ENCODE measurements at regions of chr7 and their contacts with region 1.

Region 1: DNA sequence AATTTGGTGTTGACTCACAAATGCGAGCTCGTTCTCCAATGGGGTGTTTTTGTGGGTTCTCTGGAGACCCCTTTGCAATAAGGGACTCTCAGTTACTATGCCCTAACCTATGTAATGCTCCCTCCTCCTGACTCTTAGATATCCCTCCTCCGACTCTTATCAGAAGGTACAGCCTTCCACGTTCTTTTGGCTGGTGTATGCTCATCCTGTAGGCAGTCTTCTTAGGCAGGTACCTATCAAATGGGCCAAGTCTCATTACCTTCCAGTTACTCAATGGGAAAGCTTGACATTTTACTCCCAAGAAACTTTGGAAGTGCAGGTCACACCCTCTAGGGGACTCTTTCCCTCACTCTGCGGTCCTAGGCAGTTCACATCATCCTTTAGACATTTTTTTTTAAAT is 32.6 kb downstream of the SLC26A5 start:
- DNase-seq: no peak
- ATAC-seq: no peak
- H3K4me3 ChIP-seq: no peak overlapping the region
- H3K27ac ChIP-seq: no peak overlapping the region
- H3K4me1 ChIP-seq: no peaks in the 10 kb centered on the region
- H3K27me3 ChIP-seq: no peaks in the 10 kb centered on the region
- CTCF ChIP-seq: no peak

Region 2: GRCh38 chr7:103317016-103317415 is 96.4 kb before region 1 on chr7:
- CTCF ChIA-PET with region 1: no interaction called
- POLR2A ChIA-PET with region 1: no interaction called
- intact Hi-C with region 1: loop called (anchors 5 kb)
- DNase-seq: no peak
- ATAC-seq: no peak
- H3K4me3 ChIP-seq: no peak overlapping the region
- H3K27ac ChIP-seq: no peak overlapping the region
- H3K4me1 ChIP-seq: no peaks in the 10 kb centered on the region
- H3K27me3 ChIP-seq: no peaks in the 10 kb centered on the region
- CTCF ChIP-seq: no peak

Region 3: DNA sequence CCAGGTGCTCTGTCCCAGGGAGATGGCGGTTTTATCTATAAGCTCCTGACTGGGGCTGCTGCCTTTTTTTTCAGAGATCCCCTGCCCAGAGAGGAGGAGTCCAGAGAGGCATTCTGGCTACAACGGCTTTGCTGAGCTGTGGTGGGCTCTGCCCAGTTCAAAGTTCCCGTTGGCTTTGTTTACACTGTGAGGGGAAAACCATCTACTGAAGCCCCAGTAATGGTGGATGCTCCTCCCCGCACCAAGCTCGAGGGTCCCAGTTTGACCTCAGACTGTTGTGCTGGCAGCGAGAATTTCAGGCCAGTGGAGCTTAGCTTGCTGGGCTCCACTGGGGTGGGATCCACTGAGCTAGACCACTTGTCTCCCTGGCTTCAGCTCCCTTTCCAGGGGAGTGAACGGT is 49.0 kb after region 1 on chr7:
- CTCF ChIA-PET with region 1: no interaction called
- POLR2A ChIA-PET with region 1: no interaction called
- intact Hi-C with region 1: no loop called
- DNase-seq: no peak
- ATAC-seq: no peak
- H3K4me3 ChIP-seq: no peak overlapping the region
- H3K27ac ChIP-seq: no peak overlapping the region
- H3K4me1 ChIP-seq: no peaks in the 10 kb centered on the region
- H3K27me3 ChIP-seq: no peaks in the 10 kb centered on the region
- CTCF ChIP-seq: no peak

Region 4: GRCh38 chr7:103547451-103548284 is 134.3 kb after region 1 on chr7:
- CTCF ChIA-PET with region 1: no interaction called
- POLR2A ChIA-PET with region 1: interaction called, 18 read pairs
- intact Hi-C with region 1: no loop called
- DNase-seq: no peak
- ATAC-seq: no peak
- H3K4me3 ChIP-seq: no peak overlapping the region
- H3K27ac ChIP-seq: no peak overlapping the region
- H3K4me1 ChIP-seq: peaks cover 5% of the 10 kb centered on the region; the same call in 1 of the 2 replicates
- H3K27me3 ChIP-seq: no peaks in the 10 kb centered on the region
- CTCF ChIP-seq: no peak

Region 5: DNA sequence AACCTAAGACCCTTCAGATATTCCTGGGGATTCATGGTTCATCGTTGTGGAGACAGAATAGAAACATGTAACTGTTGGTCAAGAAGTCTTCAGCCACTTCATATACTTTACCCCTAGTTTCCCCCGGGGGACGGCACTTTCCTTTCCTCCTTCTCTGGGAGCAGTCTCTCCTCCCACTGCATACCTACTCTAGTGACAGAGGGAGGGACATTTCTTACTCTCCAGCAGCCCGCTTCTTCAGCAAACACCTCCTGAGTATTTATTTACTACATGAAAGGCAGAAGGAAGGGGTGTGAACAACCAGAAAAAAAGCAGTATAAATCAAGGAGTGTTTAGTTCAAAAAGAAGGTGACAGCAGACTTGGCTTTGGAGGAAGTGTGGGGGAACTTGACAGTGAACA is 984.0 kb after region 1 on chr7:
- CTCF ChIA-PET with region 1: no interaction called
- POLR2A ChIA-PET with region 1: no interaction called
- intact Hi-C with region 1: no loop called
- DNase-seq: no peak
- ATAC-seq: no peak
- H3K4me3 ChIP-seq: no peak overlapping the region
- H3K27ac ChIP-seq: no peak overlapping the region
- H3K4me1 ChIP-seq: no peaks in the 10 kb centered on the region
- H3K27me3 ChIP-seq: peaks cover 31% of the 10 kb centered on the region
- CTCF ChIP-seq: no peak

Measured in PC-3 (cell line).